ENCODE measurements at regions of chr17 and their contacts with region 1.

Region 1: GRCh38 chr17:41777574-41778188 is 8.8 kb downstream of the JUP start:
- DNase-seq: no peak
- H3K4me3 ChIP-seq: no peak overlapping the region
- H3K27ac ChIP-seq: no peak overlapping the region
- H3K4me1 ChIP-seq: peaks cover 0 to 49% (median 29%) of the 10 kb centered on the region in 4 experiments; a peak in 6 of 7 replicates
- H3K27me3 ChIP-seq: no peaks in the 10 kb centered on the region
- CTCF ChIP-seq: no peak
- EP300 ChIP-seq: no peak
- POLR2A ChIP-seq: no peak
- RAD21 ChIP-seq: no peak

Region 2: GRCh38 chr17:41750862-41751261 is 26.8 kb before region 1 on chr17:
- CTCF ChIA-PET with region 1: interaction called, 4 read pairs
- POLR2A ChIA-PET with region 1: interaction called, 16 read pairs
- DNase-seq: no peak
- H3K4me3 ChIP-seq: no peak overlapping the region
- H3K27ac ChIP-seq: no peak overlapping the region
- H3K4me1 ChIP-seq: no peaks in the 10 kb centered on the region
- H3K27me3 ChIP-seq: no peaks in the 10 kb centered on the region; a peak in 2 of 7 replicates
- CTCF ChIP-seq: no peak
- EP300 ChIP-seq: no peak
- POLR2A ChIP-seq: no peak
- RAD21 ChIP-seq: no peak

Measured in H1 (cell line).